T-cell (primary cell): ENCODE measurements at regions of chr1 and their contacts with region 1.

Region 1: GRCh38 chr1:58968360-58968952 is 184.6 kb upstream of the JUN start:
- DNase-seq: peak in 21 of 35 experiments; percentile 1 to 51 (median 10)
- ATAC-seq: peak; percentile 71 to 87 (median 76)
- H3K4me3 ChIP-seq: no peak overlapping the region
- H3K4me3 Mint-ChIP-seq: peak overlapping the region; percentile 32 to 64 (median 53)
- H3K27ac ChIP-seq: peak overlapping the region; percentile 65
- H3K27ac Mint-ChIP-seq: peak overlapping the region; percentile 98 to 100
- H3K4me1 ChIP-seq: peaks cover 29 to 39% of the 10 kb centered on the region in 2 experiments
- H3K4me1 Mint-ChIP-seq: peaks cover 37 to 45% (median 44%) of the 10 kb centered on the region in 3 donors
- H3K27me3 ChIP-seq: no peaks in the 10 kb centered on the region
- H3K27me3 Mint-ChIP-seq: no peaks in the 10 kb centered on the region

Region 2: DNA sequence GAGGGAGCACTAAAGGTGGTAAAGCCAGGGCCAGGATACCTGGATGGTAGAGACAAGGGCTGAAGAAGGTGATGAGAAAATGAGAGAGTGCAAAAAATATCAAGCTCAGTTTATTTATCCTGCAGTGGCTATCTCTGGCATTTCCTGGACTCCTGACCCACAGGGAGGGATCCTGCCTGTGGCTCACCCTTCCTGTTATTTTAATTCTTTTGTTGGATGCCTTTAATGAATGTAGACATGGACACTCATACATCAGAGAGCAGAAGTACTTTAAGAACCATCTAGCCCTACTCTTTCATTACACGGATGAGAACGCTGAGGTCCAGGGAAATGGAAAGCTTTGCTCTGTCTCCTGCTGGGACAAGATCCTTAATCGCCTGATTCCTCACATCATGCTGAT is 205.2 kb before region 1 on chr1:
- CTCF ChIA-PET with region 1: no interaction called
- POLR2A ChIA-PET with region 1: interaction called, 3 to 10 read pairs
- DNase-seq: no peak
- ATAC-seq: no peak
- H3K4me3 ChIP-seq: no peak overlapping the region
- H3K4me3 Mint-ChIP-seq: no peak overlapping the region
- H3K27ac ChIP-seq: no peak overlapping the region
- H3K27ac Mint-ChIP-seq: no peak overlapping the region
- H3K4me1 ChIP-seq: no peaks in the 10 kb centered on the region
- H3K4me1 Mint-ChIP-seq: no peaks in the 10 kb centered on the region
- H3K27me3 ChIP-seq: no peaks in the 10 kb centered on the region
- H3K27me3 Mint-ChIP-seq: peaks cover 0 to 7% of the 10 kb centered on the region in 2 donors

Region 3: DNA sequence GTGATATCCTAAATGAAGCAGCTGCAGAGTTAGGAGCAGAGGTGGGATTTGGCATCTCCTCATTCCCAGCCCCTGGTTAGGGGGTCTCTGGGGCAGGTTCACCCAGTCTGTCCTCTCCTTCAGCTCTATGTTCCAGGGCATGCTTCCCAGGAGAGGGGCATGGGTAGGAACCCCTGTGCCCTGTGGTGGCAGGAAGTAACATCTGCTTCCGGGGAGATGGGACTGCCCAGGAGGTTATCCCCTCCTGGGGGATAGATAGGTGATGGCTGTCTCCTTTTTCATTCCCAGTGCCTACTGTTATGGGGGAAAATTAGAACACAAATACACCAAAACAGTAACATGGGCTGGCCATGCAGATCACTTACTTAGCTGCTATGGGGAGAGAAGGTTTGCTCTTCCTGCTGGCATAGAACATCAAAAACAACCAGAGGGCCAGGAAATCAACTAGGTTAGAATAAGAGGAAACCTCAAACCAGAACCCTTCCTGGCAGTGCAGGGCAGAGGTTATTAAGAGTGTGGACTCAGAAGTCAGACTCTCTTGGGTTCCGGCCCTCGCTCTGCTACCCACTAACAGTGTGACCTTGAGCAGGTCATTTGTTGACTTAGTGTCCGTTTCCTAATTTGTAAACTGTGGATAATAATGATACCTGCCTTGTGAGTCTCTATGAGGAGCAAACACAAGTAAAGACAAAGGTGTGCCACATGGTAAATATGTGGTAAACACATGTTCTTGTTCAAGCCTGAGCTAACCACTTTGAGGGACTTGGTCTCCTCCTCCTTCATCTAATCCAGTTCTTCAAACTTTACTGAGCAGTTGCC is 26.8 kb before region 1 on chr1:
- CTCF ChIA-PET with region 1: interaction called in 1 of 2 experiments, 11 read pairs
- POLR2A ChIA-PET with region 1: no interaction called
- DNase-seq: peak in 28 of 35 experiments; percentile 8 to 70 (median 29)
- ATAC-seq: peak; percentile 83 to 92 (median 88)
- H3K4me3 ChIP-seq: peak overlapping the region; percentile 5 to 68
- H3K4me3 Mint-ChIP-seq: peak overlapping the region; percentile 55 to 76 (median 61)
- H3K27ac ChIP-seq: peak overlapping the region; percentile 40
- H3K27ac Mint-ChIP-seq: peak overlapping the region; percentile 44 to 86
- H3K4me1 ChIP-seq: peaks cover 50 to 57% of the 10 kb centered on the region in 2 experiments
- H3K4me1 Mint-ChIP-seq: peaks cover 67 to 80% (median 68%) of the 10 kb centered on the region in 3 donors
- H3K27me3 ChIP-seq: no peaks in the 10 kb centered on the region
- H3K27me3 Mint-ChIP-seq: no peaks in the 10 kb centered on the region

Region 4: GRCh38 chr1:59005491-59006283 is 37.2 kb after region 1 on chr1:
- CTCF ChIA-PET with region 1: no interaction called
- POLR2A ChIA-PET with region 1: no interaction called
- DNase-seq: peak in 1 of 35 experiments; percentile 14
- ATAC-seq: peak in 2 of 4 experiments; percentile 31 to 37
- H3K4me3 ChIP-seq: no peak overlapping the region
- H3K4me3 Mint-ChIP-seq: peak overlapping the region in 1 of 3 donors; percentile 9
- H3K27ac ChIP-seq: peak overlapping the region; percentile 37
- H3K27ac Mint-ChIP-seq: peak overlapping the region; percentile 60 to 68
- H3K4me1 ChIP-seq: peaks cover 8 to 27% of the 10 kb centered on the region in 2 experiments
- H3K4me1 Mint-ChIP-seq: peaks cover 32 to 39% (median 32%) of the 10 kb centered on the region in 3 donors
- H3K27me3 ChIP-seq: no peaks in the 10 kb centered on the region
- H3K27me3 Mint-ChIP-seq: no peaks in the 10 kb centered on the region

Region 5: DNA sequence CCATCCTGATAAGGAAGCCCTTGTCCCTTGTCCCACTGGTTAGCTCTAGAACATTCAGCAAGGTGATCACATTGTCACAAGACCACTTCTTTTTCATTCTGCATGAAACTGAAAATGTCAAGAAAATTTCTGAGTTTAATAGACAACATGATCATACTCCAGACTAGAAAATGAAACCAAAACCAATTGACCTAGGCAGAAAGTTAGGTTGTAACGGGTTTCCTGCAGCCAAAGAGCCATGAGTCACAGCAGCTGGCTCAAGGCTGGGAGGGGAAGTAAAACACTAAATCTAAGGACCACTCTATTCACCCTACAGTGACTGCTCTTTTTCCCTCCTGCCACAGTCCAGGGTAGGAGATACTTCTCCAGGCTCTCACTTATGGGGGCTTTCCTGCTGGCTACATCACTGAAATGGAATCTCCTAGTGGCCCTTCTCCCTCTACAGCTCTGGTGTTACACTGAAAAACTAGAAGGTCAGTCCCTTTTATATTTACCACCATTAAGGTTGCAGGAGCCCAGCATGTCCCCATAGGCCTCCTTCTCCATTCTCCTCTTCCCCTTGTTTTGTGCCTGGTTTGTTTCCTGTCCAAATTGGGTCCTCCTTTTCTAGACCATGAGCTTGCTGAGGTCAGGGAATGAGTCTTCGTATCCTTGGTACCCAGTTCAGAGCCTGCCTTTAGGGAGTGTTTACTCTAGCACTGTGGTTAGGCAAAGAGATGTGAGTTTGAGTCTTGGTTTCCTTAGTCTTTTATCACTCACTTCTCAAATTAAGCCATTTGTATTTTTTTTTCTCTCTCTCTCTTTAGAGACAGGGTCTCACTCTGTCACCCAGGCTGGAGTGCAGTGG is 51.9 kb after region 1 on chr1:
- CTCF ChIA-PET with region 1: no interaction called
- POLR2A ChIA-PET with region 1: no interaction called
- DNase-seq: peak in 33 of 35 experiments; percentile 4 to 73 (median 22)
- ATAC-seq: peak; percentile 90 to 96 (median 91)
- H3K4me3 ChIP-seq: peak overlapping the region; percentile 41 to 59
- H3K4me3 Mint-ChIP-seq: peak overlapping the region; percentile 72 to 81 (median 74)
- H3K27ac ChIP-seq: peak overlapping the region; percentile 78
- H3K27ac Mint-ChIP-seq: peak overlapping the region; percentile 90 to 96
- H3K4me1 ChIP-seq: peaks cover 15 to 17% of the 10 kb centered on the region in 2 experiments
- H3K4me1 Mint-ChIP-seq: peaks cover 28 to 31% (median 29%) of the 10 kb centered on the region in 3 donors
- H3K27me3 ChIP-seq: no peaks in the 10 kb centered on the region
- H3K27me3 Mint-ChIP-seq: no peaks in the 10 kb centered on the region